A673 (cell line): ENCODE measurements at regions of chr19 and their contacts with region 1.

Region 1: DNA sequence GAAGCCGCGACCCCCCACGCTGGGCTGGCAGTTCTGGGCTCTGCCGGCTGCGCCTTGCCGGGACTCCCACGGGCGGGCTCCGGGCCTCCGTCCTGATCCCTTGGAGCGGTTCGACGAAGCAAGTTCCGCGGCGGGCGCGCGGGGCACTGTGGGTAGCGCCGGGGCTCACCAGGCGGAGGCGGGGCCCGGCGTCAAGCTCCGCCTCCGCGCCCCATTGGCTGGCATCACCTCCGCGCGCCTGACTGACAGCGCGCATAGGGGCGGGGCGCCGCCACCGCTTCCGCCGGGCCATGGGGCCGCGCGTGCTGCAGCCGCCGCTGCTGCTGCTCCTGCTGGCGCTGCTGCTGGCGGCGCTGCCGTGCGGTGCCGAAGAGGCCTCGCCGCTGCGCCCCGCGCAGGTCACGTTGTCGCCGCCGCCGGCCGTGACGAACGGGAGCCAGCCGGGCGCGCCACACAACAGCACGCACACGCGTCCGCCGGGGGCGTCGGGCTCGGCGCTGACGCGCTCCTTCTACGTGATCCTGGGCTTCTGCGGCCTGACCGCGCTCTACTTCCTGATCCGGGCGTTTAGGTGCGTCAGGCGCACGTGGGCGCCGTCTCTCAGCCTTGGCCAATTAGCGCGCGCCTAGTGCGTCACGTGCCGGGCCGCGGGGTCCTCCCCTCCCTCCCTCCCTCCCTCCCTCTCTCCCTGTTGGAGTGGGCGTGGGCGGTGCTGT is at the start of gene FAM174C:
- DNase-seq: peak; percentile 99
- H3K4me3 ChIP-seq: peak within 1 kb of the TSS; percentile 69
- H3K27ac ChIP-seq: peak within 1 kb of the TSS; percentile 99
- H3K4me1 ChIP-seq: peaks cover 51% of the 10 kb centered on the region
- H3K27me3 ChIP-seq: no peaks in the 10 kb centered on the region
- CTCF ChIP-seq: no peak
- total RNA-seq, gene FAM174C: 69.4 and 88.6 TPM in 2 replicates

Region 2: GRCh38 chr19:1291761-1292418 is 16.5 kb after region 1 on chr19:
- CTCF ChIA-PET with region 1: interaction called, 10 read pairs
- POLR2A ChIA-PET with region 1: no interaction called
- intact Hi-C with region 1: no loop called
- DNase-seq: peak; percentile 48
- H3K4me3 ChIP-seq: no peak overlapping the region
- H3K27ac ChIP-seq: no peak overlapping the region
- H3K4me1 ChIP-seq: peaks cover 20% of the 10 kb centered on the region
- H3K27me3 ChIP-seq: peaks cover 13% of the 10 kb centered on the region
- CTCF ChIP-seq: no peak

Region 3: DNA sequence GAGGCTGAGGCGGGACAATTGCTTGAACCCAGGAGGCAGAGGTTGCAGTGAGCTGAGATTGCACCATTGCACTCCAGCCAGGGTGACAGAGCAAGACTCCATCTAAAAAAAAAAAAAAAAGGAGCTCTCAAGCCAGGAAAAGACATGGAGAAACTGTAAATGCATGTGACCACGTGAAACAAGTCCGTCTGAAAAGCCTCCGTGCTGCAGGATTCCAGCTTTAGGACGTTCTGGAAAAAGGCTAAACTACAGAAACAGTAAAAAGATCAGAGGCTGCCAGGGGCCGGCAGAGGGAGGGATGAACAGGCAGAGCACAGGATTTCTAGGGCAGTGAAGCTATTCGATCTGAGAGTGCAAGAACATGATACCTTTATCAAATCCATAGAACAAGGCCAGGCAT is 67.6 kb after region 1 on chr19:
- CTCF ChIA-PET with region 1: no interaction called
- POLR2A ChIA-PET with region 1: no interaction called
- intact Hi-C with region 1: no loop called
- DNase-seq: no peak
- H3K4me3 ChIP-seq: no peak overlapping the region
- H3K27ac ChIP-seq: no peak overlapping the region
- H3K4me1 ChIP-seq: no peaks in the 10 kb centered on the region
- H3K27me3 ChIP-seq: no peaks in the 10 kb centered on the region
- CTCF ChIP-seq: no peak

Region 4: GRCh38 chr19:1373534-1374249 is 98.3 kb after region 1 on chr19:
- CTCF ChIA-PET with region 1: interaction called, 7 read pairs
- POLR2A ChIA-PET with region 1: no interaction called
- intact Hi-C with region 1: loop called (anchors 1 kb)
- DNase-seq: peak; percentile 44
- H3K4me3 ChIP-seq: no peak overlapping the region
- H3K27ac ChIP-seq: peak overlapping the region; percentile 63
- H3K4me1 ChIP-seq: peaks cover 5% of the 10 kb centered on the region
- H3K27me3 ChIP-seq: no peaks in the 10 kb centered on the region
- CTCF ChIP-seq: no peak

Region 5: GRCh38 chr19:1417145-1417544 is 141.7 kb after region 1 on chr19:
- CTCF ChIA-PET with region 1: no interaction called
- POLR2A ChIA-PET with region 1: no interaction called
- intact Hi-C with region 1: no loop called
- DNase-seq: no peak
- H3K4me3 ChIP-seq: no peak overlapping the region
- H3K27ac ChIP-seq: peak overlapping the region; percentile 89
- H3K4me1 ChIP-seq: peaks cover 24% of the 10 kb centered on the region
- H3K27me3 ChIP-seq: no peaks in the 10 kb centered on the region
- CTCF ChIP-seq: no peak

Region 6: GRCh38 chr19:1445185-1445931 is 169.9 kb after region 1 on chr19:
- CTCF ChIA-PET with region 1: no interaction called
- POLR2A ChIA-PET with region 1: no interaction called
- intact Hi-C with region 1: loop called (anchors 10 kb)
- DNase-seq: peak; percentile 72
- H3K4me3 ChIP-seq: peak overlapping the region; percentile 56
- H3K27ac ChIP-seq: no peak overlapping the region
- H3K4me1 ChIP-seq: peaks cover 26% of the 10 kb centered on the region
- H3K27me3 ChIP-seq: peaks cover 23% of the 10 kb centered on the region
- CTCF ChIP-seq: peak; percentile 65

Region 7: DNA sequence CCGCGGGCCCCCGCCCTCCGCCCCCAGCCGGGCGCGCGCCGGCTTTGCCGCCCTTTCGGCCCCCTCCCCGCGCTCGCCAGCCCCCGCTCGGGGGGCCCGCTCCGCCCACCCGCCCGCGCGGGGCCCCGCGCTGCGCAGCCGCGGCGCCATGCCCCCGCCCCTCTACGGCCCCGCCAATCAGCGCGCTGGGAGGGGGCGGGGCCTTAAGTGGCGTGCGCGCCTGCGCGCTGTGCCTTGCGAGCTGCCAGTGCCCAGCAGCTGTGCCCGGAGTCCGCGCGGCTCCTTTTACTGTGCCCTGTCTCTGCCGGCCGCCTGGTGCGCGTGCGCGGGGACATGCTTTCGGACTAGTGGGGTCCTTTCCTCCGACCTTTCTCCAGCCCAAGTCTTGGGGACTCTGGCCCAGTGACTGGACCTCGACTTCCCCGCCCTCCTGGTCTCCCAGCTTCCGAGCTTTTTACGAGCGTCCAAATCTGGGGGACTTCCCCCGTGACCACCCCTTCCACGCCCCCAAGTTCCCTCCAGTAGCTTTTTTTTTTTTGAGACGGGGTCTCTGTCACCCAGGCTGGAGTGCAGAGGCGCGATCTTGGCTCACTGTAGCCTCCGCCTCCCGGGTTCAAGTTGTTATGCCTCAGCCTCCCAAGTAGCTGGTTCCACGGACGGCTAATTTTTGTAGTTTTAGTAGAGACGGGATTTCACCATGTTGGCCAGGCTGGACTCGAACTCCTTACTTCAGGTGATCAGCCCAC is 317.5 kb after region 1 on chr19 and contains the start of gene MBD3:
- CTCF ChIA-PET with region 1: no interaction called
- POLR2A ChIA-PET with region 1: no interaction called
- intact Hi-C with region 1: loop called (anchors 10 kb)
- DNase-seq: peak; percentile 96
- H3K4me3 ChIP-seq: peak within 1 kb of the TSS; percentile 100
- H3K27ac ChIP-seq: peak within 1 kb of the TSS; percentile 100
- H3K4me1 ChIP-seq: peaks cover 10% of the 10 kb centered on the region
- H3K27me3 ChIP-seq: no peaks in the 10 kb centered on the region
- CTCF ChIP-seq: no peak
- total RNA-seq, gene MBD3: 138 and 139 TPM in 2 replicates